ENCODE measurements at regions of chr3 and their contacts with region 1.

Region 1: GRCh38 chr3:18787441-18787840 is 360.9 kb upstream of the KCNH8 start:
- DNase-seq: no peak
- H3K4me3 Mint-ChIP-seq: no peak overlapping the region
- H3K27ac Mint-ChIP-seq: no peak overlapping the region
- H3K4me1 Mint-ChIP-seq: peaks cover 6% of the 10 kb centered on the region
- H3K27me3 Mint-ChIP-seq: peaks cover 2% of the 10 kb centered on the region

Region 2: GRCh38 chr3:18808423-18808822 is 21.0 kb after region 1 on chr3:
- intact Hi-C with region 1: no loop called
- DNase-seq: no peak
- H3K4me3 Mint-ChIP-seq: no peak overlapping the region
- H3K27ac Mint-ChIP-seq: no peak overlapping the region
- H3K4me1 Mint-ChIP-seq: peaks cover 8% of the 10 kb centered on the region
- H3K27me3 Mint-ChIP-seq: no peaks in the 10 kb centered on the region

Region 3: DNA sequence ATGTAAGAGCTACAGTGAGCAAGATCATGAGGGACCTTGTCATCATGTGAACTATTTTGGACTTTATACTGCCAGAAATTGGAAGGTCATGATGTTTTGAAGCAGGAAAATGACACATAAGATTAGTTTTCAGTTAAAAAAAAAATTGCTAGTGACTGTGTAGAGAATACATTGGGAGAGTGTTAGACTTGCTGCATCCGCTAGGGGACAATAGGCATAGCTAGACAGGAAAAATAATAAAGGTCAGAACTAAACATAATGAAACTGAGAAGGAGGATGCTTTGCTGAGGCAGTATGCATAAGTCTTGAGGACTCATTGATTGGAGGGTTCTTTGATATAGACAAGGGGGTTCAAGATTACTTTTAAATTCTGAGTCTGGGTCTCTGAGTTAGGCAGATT is 85.0 kb after region 1 on chr3:
- intact Hi-C with region 1: loop called (anchors 5 kb)
- DNase-seq: no peak
- H3K4me3 Mint-ChIP-seq: no peak overlapping the region
- H3K27ac Mint-ChIP-seq: no peak overlapping the region
- H3K4me1 Mint-ChIP-seq: peaks cover 32% of the 10 kb centered on the region
- H3K27me3 Mint-ChIP-seq: no peaks in the 10 kb centered on the region